Gastrocnemius medialis (tissue), 4 donors: ENCODE measurements at regions of chr19 and their contacts with region 1.

Region 1: GRCh38 chr19:21151460-21151859 is 9.6 kb downstream of the ZNF431 start:
- DNase-seq: no peak
- ATAC-seq: no peak
- H3K4me3 ChIP-seq: no peak overlapping the region
- H3K27ac ChIP-seq: no peak overlapping the region
- H3K4me1 ChIP-seq: no peaks in the 10 kb centered on the region
- H3K27me3 ChIP-seq: no peaks in the 10 kb centered on the region
- CTCF ChIP-seq: no peak
- POLR2A ChIP-seq: no peak

Region 2: DNA sequence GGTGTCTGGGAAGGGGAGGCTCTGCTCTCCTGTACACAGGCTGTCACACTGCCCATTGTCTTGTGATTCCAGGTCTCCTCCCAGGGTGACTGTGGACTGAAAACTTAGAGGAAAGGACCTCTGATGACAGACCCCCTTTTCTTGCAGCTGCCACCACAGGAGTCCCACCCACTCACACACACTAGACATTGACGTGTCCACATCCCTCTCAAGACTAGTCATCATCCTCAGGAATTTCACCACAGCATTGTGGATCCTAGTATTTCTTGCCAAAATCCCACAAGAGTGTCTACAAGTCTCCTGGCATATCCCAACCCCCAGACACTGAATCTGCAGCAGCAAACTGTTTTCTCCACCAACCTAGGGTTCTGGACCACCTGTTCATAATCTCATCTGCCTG is 223.1 kb before region 1 on chr19:
- in situ Hi-C with region 1: no loop called
- intact Hi-C with region 1: no loop called
- DNase-seq: no peak
- ATAC-seq: no peak
- H3K4me3 ChIP-seq: no peak overlapping the region
- H3K27ac ChIP-seq: no peak overlapping the region
- H3K4me1 ChIP-seq: no peaks in the 10 kb centered on the region
- H3K27me3 ChIP-seq: no peaks in the 10 kb centered on the region
- CTCF ChIP-seq: no peak
- POLR2A ChIP-seq: no peak

Region 3: GRCh38 chr19:21092109-21092508 is 59.4 kb before region 1 on chr19:
- in situ Hi-C with region 1: no loop called
- intact Hi-C with region 1: loop called (anchors 5 kb)
- DNase-seq: no peak
- ATAC-seq: no peak
- H3K4me3 ChIP-seq: no peak overlapping the region
- H3K27ac ChIP-seq: no peak overlapping the region
- H3K4me1 ChIP-seq: no peaks in the 10 kb centered on the region
- H3K27me3 ChIP-seq: no peaks in the 10 kb centered on the region
- CTCF ChIP-seq: no peak
- POLR2A ChIP-seq: no peak